Caco-2 (cell line): ENCODE measurements at regions of chr5 and their contacts with region 1.

Region 1: GRCh38 chr5:180291943-180292831 is at the start of gene MAPK9:
- DNase-seq: peak; percentile 82 to 91
- H3K4me3 ChIP-seq: peak within 1 kb of the TSS; percentile 86
- H3K4me3 Mint-ChIP-seq: peak within 1 kb of the TSS; percentile 94
- H3K27ac Mint-ChIP-seq: peak within 1 kb of the TSS; percentile 91
- H3K4me1 ChIP-seq: peaks cover 39% of the 10 kb centered on the region
- H3K4me1 Mint-ChIP-seq: peaks cover 44% of the 10 kb centered on the region
- H3K27me3 ChIP-seq: no peaks in the 10 kb centered on the region
- H3K27me3 Mint-ChIP-seq: no peaks in the 10 kb centered on the region
- CTCF ChIP-seq: no peak
- total RNA-seq, gene MAPK9: 76.5 and 93.1 TPM in 2 replicates

Region 2: DNA sequence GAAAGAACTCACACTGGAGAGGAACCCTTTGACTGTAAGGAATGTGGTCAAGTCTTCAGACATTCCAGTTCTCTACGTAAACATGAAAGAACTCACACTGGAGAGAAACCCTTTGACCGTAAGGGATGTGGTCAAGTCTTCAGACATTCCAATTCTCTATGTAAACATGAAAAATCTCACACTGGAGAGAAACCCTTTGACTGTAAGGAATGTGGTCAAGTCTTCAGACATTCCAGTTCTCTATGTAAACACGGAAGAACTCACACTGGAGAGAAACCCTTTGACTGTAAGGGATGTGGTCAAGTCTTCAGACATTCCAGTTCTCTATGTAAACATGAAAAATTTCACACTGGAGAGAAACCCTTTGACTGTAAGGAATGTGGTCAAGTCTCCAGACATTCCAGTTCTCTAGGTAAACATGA is 32.9 kb before region 1 on chr5:
- CTCF ChIA-PET with region 1: no interaction called
- POLR2A ChIA-PET with region 1: no interaction called
- intact Hi-C with region 1: loop called (anchors 2 kb)
- DNase-seq: no peak
- H3K4me3 ChIP-seq: no peak overlapping the region
- H3K4me3 Mint-ChIP-seq: no peak overlapping the region
- H3K27ac Mint-ChIP-seq: no peak overlapping the region
- H3K4me1 ChIP-seq: peaks cover 4% of the 10 kb centered on the region; the same call in 1 of the 2 replicates
- H3K4me1 Mint-ChIP-seq: no peaks in the 10 kb centered on the region
- H3K27me3 ChIP-seq: no peaks in the 10 kb centered on the region
- H3K27me3 Mint-ChIP-seq: no peaks in the 10 kb centered on the region
- CTCF ChIP-seq: no peak

Region 3: DNA sequence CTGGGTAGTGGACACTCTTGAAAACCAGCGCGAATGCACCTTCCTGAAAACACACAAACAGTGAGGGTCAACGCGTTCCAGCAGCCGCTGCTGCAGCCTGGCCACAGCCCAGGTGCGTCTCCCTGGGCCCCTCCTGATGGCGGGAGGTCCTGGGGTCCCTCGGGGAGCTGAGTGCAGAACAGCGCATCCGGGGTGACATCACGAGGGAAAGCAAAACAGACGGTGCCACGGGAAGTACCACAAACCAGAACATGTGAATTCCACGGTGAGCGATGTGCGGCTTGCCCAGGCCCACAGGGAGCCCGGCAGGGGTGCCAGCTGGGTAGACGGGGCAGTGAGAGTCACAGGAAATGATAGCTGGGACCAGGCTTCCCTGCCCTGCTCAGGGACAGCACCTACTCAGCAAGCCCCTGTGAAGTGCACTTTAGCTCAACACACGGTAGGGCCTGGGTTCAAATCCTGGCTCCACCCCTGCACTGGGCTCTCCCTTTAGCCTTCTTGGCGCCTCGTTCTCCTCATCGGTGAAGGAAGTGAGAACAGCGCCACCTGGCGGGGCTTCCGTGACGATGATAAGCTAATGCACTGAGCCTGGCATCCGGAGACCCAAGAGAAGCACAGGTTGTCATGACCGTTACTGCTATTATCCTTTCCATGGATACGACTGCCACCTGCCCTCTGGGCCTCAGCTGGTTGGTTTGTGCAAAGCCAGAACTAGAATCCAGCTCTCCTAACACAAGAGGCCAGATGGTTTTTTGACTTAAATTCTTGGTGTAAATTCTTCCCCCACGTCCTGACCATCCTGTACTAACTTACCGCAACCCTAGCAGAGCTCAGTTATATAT is 36.3 kb after region 1 on chr5:
- CTCF ChIA-PET with region 1: interaction called, 7 read pairs
- POLR2A ChIA-PET with region 1: no interaction called
- intact Hi-C with region 1: loop called (anchors 1 kb)
- DNase-seq: peak; percentile 82 to 84
- H3K4me3 ChIP-seq: no peak overlapping the region
- H3K4me3 Mint-ChIP-seq: no peak overlapping the region
- H3K27ac Mint-ChIP-seq: no peak overlapping the region
- H3K4me1 ChIP-seq: no peaks in the 10 kb centered on the region
- H3K4me1 Mint-ChIP-seq: no peaks in the 10 kb centered on the region
- H3K27me3 ChIP-seq: no peaks in the 10 kb centered on the region
- H3K27me3 Mint-ChIP-seq: peaks cover 3% of the 10 kb centered on the region
- CTCF ChIP-seq: peak; percentile 82 to 91

Region 4: DNA sequence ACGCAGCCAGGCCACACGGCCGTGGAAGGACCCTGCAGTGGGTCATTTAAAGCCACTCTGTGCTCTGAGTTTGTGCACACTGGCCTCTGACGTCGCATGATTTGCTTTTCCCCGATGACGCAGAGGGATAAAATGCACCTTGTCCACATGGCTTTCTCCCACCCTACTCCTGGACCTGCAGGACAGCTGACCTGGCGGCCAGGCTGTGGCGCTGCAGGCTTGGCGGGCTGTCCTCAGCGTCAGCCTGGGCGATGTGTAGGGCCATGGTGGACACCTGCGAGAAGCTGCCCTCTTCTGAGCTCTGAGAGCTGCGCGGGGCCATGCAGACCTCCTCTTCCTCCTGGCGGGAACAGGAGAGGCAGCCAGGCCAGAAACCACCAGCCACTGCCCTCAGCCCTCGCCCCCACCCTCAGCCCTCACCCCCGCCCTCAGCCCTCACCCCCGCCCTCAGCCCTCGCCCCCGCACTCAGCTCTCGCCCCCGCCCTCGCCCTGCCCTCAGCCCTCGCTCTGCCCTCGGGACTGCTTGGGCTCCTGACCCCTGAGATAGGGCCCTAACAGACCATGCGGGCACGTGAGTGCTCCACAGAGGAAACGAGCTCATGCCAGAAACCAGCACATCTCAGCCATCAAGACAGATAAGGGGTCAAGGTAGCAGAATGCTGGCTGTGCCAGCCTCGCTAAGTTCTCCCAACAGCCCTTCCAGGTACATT is 319.1 kb after region 1 on chr5:
- CTCF ChIA-PET with region 1: interaction called, 11 read pairs
- POLR2A ChIA-PET with region 1: no interaction called
- intact Hi-C with region 1: no loop called
- DNase-seq: no peak
- H3K4me3 ChIP-seq: no peak overlapping the region
- H3K4me3 Mint-ChIP-seq: no peak overlapping the region
- H3K27ac Mint-ChIP-seq: no peak overlapping the region
- H3K4me1 ChIP-seq: peaks cover 8% of the 10 kb centered on the region; the same call in 1 of the 2 replicates
- H3K4me1 Mint-ChIP-seq: no peaks in the 10 kb centered on the region
- H3K27me3 ChIP-seq: no peaks in the 10 kb centered on the region
- H3K27me3 Mint-ChIP-seq: peaks cover 3% of the 10 kb centered on the region
- CTCF ChIP-seq: no peak